HepG2 (cell line): ENCODE measurements at regions of chr16 and their contacts with region 1.

Region 1: DNA sequence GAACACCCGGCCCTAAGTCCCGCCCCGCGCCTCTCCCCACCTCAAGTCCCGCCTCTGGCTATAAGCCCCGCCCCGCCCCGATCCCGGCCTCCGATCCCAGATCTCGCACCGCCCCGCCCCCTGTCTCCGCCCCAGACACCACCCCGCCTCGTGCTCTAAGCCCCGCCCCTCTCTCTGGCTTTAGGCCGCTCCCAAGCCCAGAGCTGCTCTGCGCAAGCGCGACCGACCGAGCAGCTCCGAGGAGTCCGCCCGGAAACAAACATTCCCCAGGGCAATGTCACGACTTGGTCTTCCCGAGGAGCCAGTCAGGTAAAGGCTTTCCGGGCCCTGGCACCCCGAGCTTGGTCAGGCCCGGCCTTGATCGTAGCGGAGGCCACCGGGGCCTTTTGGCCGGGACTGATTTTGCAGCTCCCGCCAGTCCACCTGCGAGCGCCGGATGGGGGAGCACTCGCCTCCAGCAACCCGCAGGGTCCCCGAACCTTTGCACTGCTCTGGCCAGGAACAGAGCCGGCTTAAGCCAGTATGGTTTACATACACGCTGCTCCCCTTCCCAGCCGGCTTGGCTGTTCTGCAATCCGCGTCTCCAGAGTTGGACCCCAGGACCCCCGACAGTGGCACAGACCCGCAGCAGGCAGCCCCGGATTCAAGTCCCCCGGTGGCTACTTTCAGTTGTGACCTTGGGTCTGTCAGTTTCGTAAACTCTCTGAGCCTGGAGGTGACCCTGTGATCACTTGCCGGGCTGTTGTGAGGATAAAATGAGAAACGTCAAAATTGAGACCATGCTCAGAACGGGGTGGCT is at the start of gene NUDT7:
- DNase-seq: peak; percentile 95
- ATAC-seq: peak; percentile 90
- H3K4me3 ChIP-seq: peak within 1 kb of the TSS; percentile 70 to 84 (median 81)
- H3K27ac ChIP-seq: peak within 1 kb of the TSS; percentile 95
- H3K4me1 ChIP-seq: peaks cover 34% of the 10 kb centered on the region
- H3K27me3 ChIP-seq: no peaks in the 10 kb centered on the region; a peak in 1 of 5 replicates
- CTCF ChIP-seq: peak; percentile 79
- EP300 ChIP-seq: peak in 1 of 2 experiments; percentile 14; a peak in 2 of 4 replicates
- POLR2A ChIP-seq: peak; percentile 88 to 89; a peak in 3 of 4 replicates
- RAD21 ChIP-seq: peak; percentile 90
- total RNA-seq, gene NUDT7: 14.3 and 17.8 TPM in 2 replicates

Region 2: DNA sequence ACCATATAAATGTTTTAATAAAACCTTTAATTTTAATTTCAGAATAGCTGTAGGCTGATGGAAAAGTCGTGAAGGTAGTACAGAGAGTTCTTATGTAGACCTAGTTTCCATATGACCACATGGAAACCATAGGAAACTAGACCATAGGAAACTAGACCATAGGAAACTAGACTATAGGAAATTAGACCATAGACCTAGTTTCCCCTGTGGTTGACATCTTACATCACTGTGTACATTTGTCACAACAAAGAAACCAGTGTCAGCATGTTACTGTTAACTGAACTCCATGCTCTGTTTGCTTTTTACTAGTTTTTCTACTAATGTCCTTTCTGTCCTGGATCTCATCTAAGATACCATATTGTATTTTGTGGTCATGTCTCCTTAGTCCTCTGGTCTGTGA is 14.4 kb after region 1 on chr16:
- CTCF ChIA-PET with region 1: no interaction called
- POLR2A ChIA-PET with region 1: interaction called, 21 read pairs
- in situ Hi-C with region 1: no loop called
- intact Hi-C with region 1: loop called (anchors 2 kb)
- DNase-seq: peak; percentile 91
- ATAC-seq: peak; percentile 97
- H3K4me3 ChIP-seq: no peak overlapping the region
- H3K27ac ChIP-seq: peak overlapping the region; percentile 68
- H3K4me1 ChIP-seq: peaks cover 42% of the 10 kb centered on the region
- H3K27me3 ChIP-seq: no peaks in the 10 kb centered on the region
- CTCF ChIP-seq: no peak
- EP300 ChIP-seq: peak in 1 of 2 experiments; percentile 90; a peak in 2 of 4 replicates
- POLR2A ChIP-seq: no peak
- RAD21 ChIP-seq: no peak

Region 3: DNA sequence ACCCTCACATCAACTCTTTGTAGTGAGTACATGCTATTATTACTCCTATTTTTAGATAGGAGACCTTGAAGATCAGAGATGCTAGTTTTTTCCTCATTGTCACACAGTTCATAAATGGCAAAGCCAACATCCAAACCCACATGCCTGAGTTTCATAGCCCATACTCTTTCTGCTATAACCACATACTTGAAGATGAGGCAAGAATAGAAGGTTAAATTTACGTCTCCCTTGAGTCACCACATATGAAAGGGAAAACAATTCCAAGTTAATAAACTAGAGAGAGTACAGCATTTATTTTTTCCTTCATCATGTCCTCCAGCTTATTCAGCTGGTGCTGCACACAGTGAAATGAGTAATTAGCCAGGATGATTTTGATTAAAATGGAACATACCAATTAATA is 23.5 kb after region 1 on chr16:
- CTCF ChIA-PET with region 1: no interaction called
- POLR2A ChIA-PET with region 1: interaction called, 16 read pairs
- in situ Hi-C with region 1: no loop called
- intact Hi-C with region 1: no loop called
- DNase-seq: no peak
- ATAC-seq: no peak
- H3K4me3 ChIP-seq: no peak overlapping the region
- H3K27ac ChIP-seq: no peak overlapping the region
- H3K4me1 ChIP-seq: peaks cover 29% of the 10 kb centered on the region
- H3K27me3 ChIP-seq: no peaks in the 10 kb centered on the region
- CTCF ChIP-seq: no peak
- EP300 ChIP-seq: no peak
- POLR2A ChIP-seq: no peak
- RAD21 ChIP-seq: no peak

Region 4: GRCh38 chr16:77762262-77762661 is 39.8 kb after region 1 on chr16:
- CTCF ChIA-PET with region 1: no interaction called
- POLR2A ChIA-PET with region 1: interaction called, 3 read pairs
- in situ Hi-C with region 1: no loop called
- intact Hi-C with region 1: loop called (anchors 1 kb)
- DNase-seq: peak; percentile 42
- ATAC-seq: peak; percentile 17
- H3K4me3 ChIP-seq: no peak overlapping the region
- H3K27ac ChIP-seq: no peak overlapping the region
- H3K4me1 ChIP-seq: peaks cover 85% of the 10 kb centered on the region
- H3K27me3 ChIP-seq: no peaks in the 10 kb centered on the region
- CTCF ChIP-seq: no peak
- EP300 ChIP-seq: peak in 1 of 2 experiments; percentile 82; a peak in 1 of 4 replicates
- POLR2A ChIP-seq: no peak
- RAD21 ChIP-seq: no peak

Region 5: DNA sequence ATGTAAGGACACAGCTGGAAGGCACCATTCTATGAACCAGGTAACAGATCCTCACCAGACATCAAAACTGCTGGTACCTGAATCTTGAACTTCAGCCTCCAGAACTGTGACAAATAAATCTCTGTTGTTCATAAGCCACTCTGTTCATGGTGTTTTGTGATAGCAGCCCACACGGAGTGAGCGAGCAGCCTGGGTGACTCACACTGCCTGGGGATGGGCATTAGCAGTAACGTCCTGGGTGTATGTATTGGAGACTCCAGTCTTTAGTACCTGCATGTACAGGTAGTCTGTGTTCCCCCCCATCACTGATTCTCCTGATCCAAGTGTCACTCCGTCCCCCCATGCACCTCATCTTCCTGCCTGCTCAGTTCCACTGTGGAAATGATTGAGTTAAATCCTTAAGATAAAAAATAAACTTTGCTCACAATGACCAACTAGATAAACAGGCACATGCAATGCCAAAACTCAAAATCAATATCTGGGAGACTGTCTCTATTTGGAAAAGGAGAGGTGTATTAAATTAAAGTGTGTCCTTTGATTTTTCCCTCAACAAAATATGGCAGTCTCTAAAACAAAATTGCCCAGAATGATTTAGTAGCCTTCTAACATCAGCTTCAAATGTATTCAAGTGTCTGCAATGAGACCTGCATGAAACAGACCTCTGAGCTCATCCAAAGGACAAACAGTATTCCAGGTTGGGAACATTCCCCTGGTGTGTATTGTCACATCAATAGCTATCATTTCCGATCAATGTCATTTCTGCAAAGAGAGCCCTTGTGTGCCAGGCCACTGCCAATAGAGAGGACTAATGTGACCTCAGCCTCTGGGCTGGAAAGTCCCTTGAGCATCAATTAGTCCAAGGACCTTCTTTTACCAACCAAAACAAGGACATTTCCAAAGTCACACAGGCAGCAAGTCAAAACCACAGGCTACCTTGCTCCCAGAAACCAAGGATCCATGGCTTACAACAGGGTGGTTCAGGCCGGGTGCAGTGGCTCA is 53.7 kb after region 1 on chr16:
- CTCF ChIA-PET with region 1: no interaction called
- POLR2A ChIA-PET with region 1: interaction called, 10 read pairs
- in situ Hi-C with region 1: no loop called
- intact Hi-C with region 1: loop called (anchors 1 kb)
- DNase-seq: peak; percentile 39
- ATAC-seq: peak; percentile 87
- H3K4me3 ChIP-seq: no peak overlapping the region
- H3K27ac ChIP-seq: peak overlapping the region; percentile 48
- H3K4me1 ChIP-seq: peaks cover 46% of the 10 kb centered on the region
- H3K27me3 ChIP-seq: no peaks in the 10 kb centered on the region
- CTCF ChIP-seq: no peak
- EP300 ChIP-seq: peak in 1 of 2 experiments; percentile 55; a peak in 1 of 4 replicates
- POLR2A ChIP-seq: no peak
- RAD21 ChIP-seq: no peak

Region 6: DNA sequence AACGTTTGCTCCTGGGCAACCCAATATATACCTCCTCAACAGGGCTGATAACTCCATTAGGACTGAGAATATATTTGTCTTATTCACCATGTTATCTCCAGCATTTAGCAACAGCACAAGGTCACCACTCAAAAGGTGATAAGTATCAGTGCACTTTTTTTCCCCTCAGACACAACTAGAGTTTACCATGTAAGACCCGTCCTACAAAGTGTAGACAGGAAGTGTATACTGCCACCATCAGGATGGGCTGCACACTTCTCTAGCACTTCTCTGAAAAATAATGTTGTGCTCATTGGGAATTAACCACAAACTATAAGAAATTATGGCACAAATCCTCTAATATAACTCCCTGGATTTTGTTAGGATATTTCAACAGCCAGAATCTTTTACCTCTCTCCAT is 60.2 kb after region 1 on chr16:
- CTCF ChIA-PET with region 1: interaction called, 3 read pairs
- POLR2A ChIA-PET with region 1: interaction called, 6 read pairs
- in situ Hi-C with region 1: no loop called
- intact Hi-C with region 1: loop called (anchors 1 kb)
- DNase-seq: peak; percentile 49
- ATAC-seq: peak; percentile 87
- H3K4me3 ChIP-seq: no peak overlapping the region
- H3K27ac ChIP-seq: no peak overlapping the region
- H3K4me1 ChIP-seq: peaks cover 21% of the 10 kb centered on the region
- H3K27me3 ChIP-seq: peaks cover 0 to 8% of the 10 kb centered on the region in 2 experiments; a peak in 2 of 5 replicates
- CTCF ChIP-seq: peak; percentile 81
- EP300 ChIP-seq: no peak
- POLR2A ChIP-seq: no peak
- RAD21 ChIP-seq: peak; percentile 65

Region 7: GRCh38 chr16:77794586-77794985 is 72.1 kb after region 1 on chr16:
- CTCF ChIA-PET with region 1: no interaction called
- POLR2A ChIA-PET with region 1: no interaction called
- in situ Hi-C with region 1: no loop called
- intact Hi-C with region 1: no loop called
- DNase-seq: no peak
- ATAC-seq: no peak
- H3K4me3 ChIP-seq: no peak overlapping the region
- H3K27ac ChIP-seq: no peak overlapping the region
- H3K4me1 ChIP-seq: no peaks in the 10 kb centered on the region
- H3K27me3 ChIP-seq: peaks cover 4 to 28% of the 10 kb centered on the region in 2 experiments; a peak in 4 of 5 replicates
- CTCF ChIP-seq: no peak
- EP300 ChIP-seq: no peak
- POLR2A ChIP-seq: no peak
- RAD21 ChIP-seq: no peak